Gastrocnemius medialis (tissue), 4 donors: ENCODE measurements at regions of chr1 and their contacts with region 1.

Region 1: DNA sequence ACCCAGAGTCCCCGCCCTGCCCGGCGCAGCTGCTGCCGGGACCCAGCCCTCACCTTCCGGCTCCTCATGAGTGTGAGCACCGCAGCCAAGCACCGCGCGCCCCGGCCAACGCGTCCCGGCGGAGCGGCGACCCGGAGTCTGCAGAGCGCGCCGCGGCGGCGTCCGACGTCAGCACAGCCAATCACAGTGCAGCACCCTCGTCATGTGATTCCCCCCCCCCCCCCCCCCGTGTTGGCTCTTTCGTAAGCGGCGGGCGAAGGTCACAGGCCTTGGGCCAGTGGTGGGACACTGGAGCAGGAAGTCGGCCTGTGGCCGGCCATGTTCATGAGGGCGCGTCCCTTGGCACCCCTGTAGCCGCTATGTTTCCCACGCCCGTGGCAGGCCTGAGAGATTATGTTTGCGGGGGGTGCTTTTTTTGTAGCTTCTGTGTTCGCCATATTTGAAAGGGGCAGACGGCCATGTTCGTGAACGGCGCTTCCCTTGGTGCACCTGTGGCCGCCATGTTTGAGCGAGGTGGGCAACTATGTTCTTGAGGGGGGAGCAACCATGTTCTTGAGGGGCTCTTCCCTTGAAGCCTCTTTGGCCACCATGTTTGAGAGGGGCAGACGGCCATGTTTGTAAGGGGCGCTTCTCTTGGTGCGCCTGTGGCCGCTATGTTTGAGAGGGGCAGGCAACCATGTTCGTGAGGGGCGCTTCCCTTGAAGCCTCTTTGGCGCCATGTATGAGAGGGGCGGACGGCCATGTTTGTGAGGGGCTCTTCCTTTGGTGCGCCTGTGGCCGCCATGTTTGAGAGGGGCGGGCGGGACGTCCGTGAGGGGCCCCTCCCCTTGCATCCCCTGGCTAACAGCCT is at the start of gene C1orf174:
- DNase-seq: peak; percentile 94 to 97
- ATAC-seq: peak; percentile 89 to 90
- H3K4me3 ChIP-seq: peak within 1 kb of the TSS; percentile 91 to 99 (median 96)
- H3K27ac ChIP-seq: peak within 1 kb of the TSS; percentile 97 to 99 (median 98)
- H3K4me1 ChIP-seq: peaks cover 8 to 9% of the 10 kb centered on the region in 2 donors
- H3K27me3 ChIP-seq: no peaks in the 10 kb centered on the region
- CTCF ChIP-seq: no peak
- POLR2A ChIP-seq: peak; percentile 47 to 50
- total RNA-seq, gene C1orf174: 10.1 to 28.5 (median 13.5) TPM

Region 2: GRCh38 chr1:1919304-1920056 is 1980.9 kb before region 1 on chr1:
- in situ Hi-C with region 1: no loop called
- intact Hi-C with region 1: loop called (anchors 5 kb)
- DNase-seq: peak; percentile 98 to 99
- ATAC-seq: peak; percentile 67 to 77
- H3K4me3 ChIP-seq: peak overlapping the region; percentile 53 to 92 (median 68)
- H3K27ac ChIP-seq: peak overlapping the region; percentile 80 to 98 (median 93)
- H3K4me1 ChIP-seq: peaks cover 27 to 45% of the 10 kb centered on the region in 2 donors
- H3K27me3 ChIP-seq: no peaks in the 10 kb centered on the region
- CTCF ChIP-seq: no peak
- POLR2A ChIP-seq: no peak

Region 3: GRCh38 chr1:3624200-3625136 is 275.9 kb before region 1 on chr1 and contains the start of gene TPRG1L:
- in situ Hi-C with region 1: no loop called
- intact Hi-C with region 1: loop called (anchors 10 kb)
- DNase-seq: peak; percentile 96 to 97
- ATAC-seq: peak; percentile 97 to 98
- H3K4me3 ChIP-seq: peak within 1 kb of the TSS; percentile 91 to 100 (median 96)
- H3K27ac ChIP-seq: peak within 1 kb of the TSS; percentile 59 to 91 (median 83)
- H3K4me1 ChIP-seq: peaks cover 21 to 23% of the 10 kb centered on the region in 2 donors
- H3K27me3 ChIP-seq: no peaks in the 10 kb centered on the region
- CTCF ChIP-seq: no peak
- POLR2A ChIP-seq: peak; percentile 49 to 67
- total RNA-seq, gene TPRG1L: 25.3 to 38.7 (median 30.0) TPM

Region 4: GRCh38 chr1:3856908-3857790 is 43.2 kb before region 1 on chr1 and contains the starts of genes CEP104 and DFFB:
- in situ Hi-C with region 1: no loop called
- intact Hi-C with region 1: loop called (anchors 1 kb)
- DNase-seq: peak; percentile 89 to 97
- ATAC-seq: peak; percentile 94 to 95
- H3K4me3 ChIP-seq: peak within 1 kb of the TSS; percentile 66 to 92 (median 84)
- H3K27ac ChIP-seq: peak within 1 kb of the TSS; percentile 78 to 87 (median 84)
- H3K4me1 ChIP-seq: peaks cover 19 to 22% of the 10 kb centered on the region in 2 donors
- H3K27me3 ChIP-seq: no peaks in the 10 kb centered on the region
- CTCF ChIP-seq: no peak
- POLR2A ChIP-seq: peak; percentile 50 to 56
- total RNA-seq, gene CEP104: 16.6 to 39.0 (median 21.9) TPM
- total RNA-seq, gene DFFB: 1.3 to 3.6 (median 3.1) TPM